ENCODE measurements at regions of chr1 and their contacts with region 1.

Region 1: GRCh38 chr1:20633190-20634064 is at the start of gene PINK1:
- DNase-seq: peak; percentile 78 to 92 (median 87)
- H3K4me3 ChIP-seq: peak within 1 kb of the TSS; percentile 45 to 62
- H3K4me3 Mint-ChIP-seq: peak within 1 kb of the TSS; percentile 89 to 96 (median 92)
- H3K27ac ChIP-seq: peak within 1 kb of the TSS; percentile 68
- H3K27ac Mint-ChIP-seq: peak within 1 kb of the TSS; percentile 85 to 95 (median 91)
- H3K4me1 ChIP-seq: peaks cover 16% of the 10 kb centered on the region
- H3K4me1 Mint-ChIP-seq: peaks cover 4 to 17% (median 12%) of the 10 kb centered on the region in 4 donors
- H3K27me3 ChIP-seq: no peaks in the 10 kb centered on the region
- H3K27me3 Mint-ChIP-seq: peaks cover 1 to 2% of the 10 kb centered on the region in 2 donors
- total RNA-seq, gene PINK1: 19.5 to 21.7 TPM

Region 2: GRCh38 chr1:20507564-20508410 is 125.6 kb before region 1 on chr1 and contains the start of gene MUL1:
- CTCF ChIA-PET with region 1: no interaction called
- POLR2A ChIA-PET with region 1: interaction called, 13 read pairs
- intact Hi-C with region 1: loop called (anchors 5 kb)
- DNase-seq: peak; percentile 88 to 93 (median 90)
- H3K4me3 ChIP-seq: peak within 1 kb of the TSS; percentile 84 to 91
- H3K4me3 Mint-ChIP-seq: peak within 1 kb of the TSS; percentile 84 to 95 (median 91)
- H3K27ac ChIP-seq: peak within 1 kb of the TSS; percentile 91
- H3K27ac Mint-ChIP-seq: peak within 1 kb of the TSS; percentile 77 to 99 (median 94)
- H3K4me1 ChIP-seq: peaks cover 30% of the 10 kb centered on the region
- H3K4me1 Mint-ChIP-seq: peaks cover 11 to 31% (median 21%) of the 10 kb centered on the region in 4 donors
- H3K27me3 ChIP-seq: peaks cover 6% of the 10 kb centered on the region
- H3K27me3 Mint-ChIP-seq: peaks cover 0 to 3% of the 10 kb centered on the region in 2 donors
- total RNA-seq, gene MUL1: 21.4 to 22.2 TPM

Region 3: GRCh38 chr1:20521960-20522861 is 111.2 kb before region 1 on chr1:
- CTCF ChIA-PET with region 1: interaction called, 22 read pairs
- POLR2A ChIA-PET with region 1: interaction called, 3 read pairs
- intact Hi-C with region 1: loop called (anchors 2 kb)
- DNase-seq: peak; percentile 44 to 63 (median 59)
- H3K4me3 ChIP-seq: no peak overlapping the region
- H3K4me3 Mint-ChIP-seq: no peak overlapping the region
- H3K27ac ChIP-seq: no peak overlapping the region
- H3K27ac Mint-ChIP-seq: no peak overlapping the region
- H3K4me1 ChIP-seq: no peaks in the 10 kb centered on the region
- H3K4me1 Mint-ChIP-seq: peaks cover 0 to 3% (median 1%) of the 10 kb centered on the region in 4 donors
- H3K27me3 ChIP-seq: no peaks in the 10 kb centered on the region
- H3K27me3 Mint-ChIP-seq: peaks cover 6 to 21% of the 10 kb centered on the region in 2 donors

Region 4: GRCh38 chr1:20645414-20645813 is 12.0 kb after region 1 on chr1:
- CTCF ChIA-PET with region 1: interaction called, 24 read pairs
- POLR2A ChIA-PET with region 1: interaction called, 9 read pairs
- intact Hi-C with region 1: no loop called
- DNase-seq: no peak
- H3K4me3 ChIP-seq: no peak overlapping the region
- H3K4me3 Mint-ChIP-seq: no peak overlapping the region
- H3K27ac ChIP-seq: no peak overlapping the region
- H3K27ac Mint-ChIP-seq: no peak overlapping the region
- H3K4me1 ChIP-seq: no peaks in the 10 kb centered on the region
- H3K4me1 Mint-ChIP-seq: peaks cover 0 to under 1% (median under 1%) of the 10 kb centered on the region in 4 donors
- H3K27me3 ChIP-seq: no peaks in the 10 kb centered on the region
- H3K27me3 Mint-ChIP-seq: no peaks in the 10 kb centered on the region

Region 5: GRCh38 chr1:20661207-20662109 is 28.0 kb after region 1 on chr1 and contains the start of gene DDOST:
- CTCF ChIA-PET with region 1: interaction called, 10 read pairs
- POLR2A ChIA-PET with region 1: interaction called, 24 read pairs
- intact Hi-C with region 1: loop called (anchors 1 kb)
- DNase-seq: peak; percentile 93 to 97 (median 95)
- H3K4me3 ChIP-seq: peak within 1 kb of the TSS; percentile 86 to 98
- H3K4me3 Mint-ChIP-seq: peak within 1 kb of the TSS; percentile 96 to 100 (median 98)
- H3K27ac ChIP-seq: peak within 1 kb of the TSS; percentile 74
- H3K27ac Mint-ChIP-seq: peak within 1 kb of the TSS; percentile 96 to 99 (median 98)
- H3K4me1 ChIP-seq: peaks cover 37% of the 10 kb centered on the region
- H3K4me1 Mint-ChIP-seq: peaks cover 31 to 62% (median 44%) of the 10 kb centered on the region in 4 donors
- H3K27me3 ChIP-seq: no peaks in the 10 kb centered on the region
- H3K27me3 Mint-ChIP-seq: no peaks in the 10 kb centered on the region
- total RNA-seq, gene DDOST: 133 to 134 TPM

Measured in CD4-positive, alpha-beta memory T cell (primary cell).